MCF 10A (cell line): ENCODE measurements at regions of chr2 and their contacts with region 1.

Region 1: DNA sequence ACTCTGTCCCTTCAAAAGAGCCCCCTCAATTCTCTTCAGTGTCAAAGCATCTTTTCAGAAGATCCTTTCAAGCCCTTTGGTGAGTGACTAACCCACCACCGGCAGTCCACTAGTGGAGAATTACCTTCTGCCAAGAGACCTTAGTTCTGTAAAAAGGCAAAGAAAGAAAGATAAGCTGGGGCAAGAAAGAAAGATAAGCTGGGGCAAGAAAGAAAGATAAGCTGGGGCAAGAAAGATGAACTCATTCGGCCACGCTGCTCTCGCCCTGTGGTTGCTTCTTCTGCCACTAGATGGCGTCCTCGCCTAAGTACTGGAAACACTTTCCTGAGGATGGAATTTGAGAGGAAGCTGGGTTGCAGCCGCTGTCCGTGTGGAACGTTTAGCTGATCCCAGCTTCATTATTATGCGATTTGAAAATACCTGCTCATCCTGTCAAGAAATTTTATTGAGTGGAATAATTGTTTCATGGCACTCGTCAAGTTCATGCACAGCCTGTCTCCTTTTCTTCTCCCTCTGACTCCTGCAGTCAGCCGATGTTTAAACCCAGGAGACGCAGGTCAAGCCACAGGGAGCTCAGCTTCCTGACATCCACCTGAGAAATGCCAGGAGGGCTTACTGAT is 17.3 kb upstream of the ANXA4 start:
- DNase-seq: peak; percentile 81
- H3K4me3 Mint-ChIP-seq: peak overlapping the region; percentile 37
- H3K27ac Mint-ChIP-seq: no peak overlapping the region
- H3K4me1 Mint-ChIP-seq: peaks cover 5% of the 10 kb centered on the region
- H3K27me3 Mint-ChIP-seq: no peaks in the 10 kb centered on the region
- CTCF ChIP-seq: peak; percentile 93

Region 2: GRCh38 chr2:69559442-69560146 is 165.1 kb before region 1 on chr2:
- CTCF ChIA-PET with region 1: interaction called, 83 read pairs
- POLR2A ChIA-PET with region 1: no interaction called
- intact Hi-C with region 1: no loop called
- DNase-seq: peak; percentile 71
- H3K4me3 Mint-ChIP-seq: no peak overlapping the region
- H3K27ac Mint-ChIP-seq: no peak overlapping the region
- H3K4me1 Mint-ChIP-seq: peaks cover 6% of the 10 kb centered on the region
- H3K27me3 Mint-ChIP-seq: no peaks in the 10 kb centered on the region
- CTCF ChIP-seq: peak; percentile 64

Region 3: DNA sequence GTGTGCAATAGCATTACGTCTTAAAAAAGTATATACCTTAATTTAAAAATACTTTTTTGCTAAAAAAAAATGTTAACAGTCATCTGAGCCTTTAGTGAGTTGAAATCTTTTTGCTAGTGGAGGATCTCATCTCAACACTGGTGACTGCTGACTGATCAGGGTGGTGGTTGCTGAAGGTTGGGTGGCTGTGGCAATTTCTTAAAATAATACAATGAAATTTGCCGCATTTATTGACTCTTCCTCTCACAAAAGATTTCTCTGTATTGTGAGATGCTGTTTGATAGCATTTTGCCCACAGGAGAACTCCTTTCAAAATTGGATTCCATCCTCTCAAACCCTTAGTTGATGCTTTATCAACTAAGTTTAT is 28.8 kb before region 1 on chr2:
- CTCF ChIA-PET with region 1: interaction called, 13 read pairs
- POLR2A ChIA-PET with region 1: no interaction called
- intact Hi-C with region 1: no loop called
- DNase-seq: no peak
- H3K4me3 Mint-ChIP-seq: no peak overlapping the region
- H3K27ac Mint-ChIP-seq: no peak overlapping the region
- H3K4me1 Mint-ChIP-seq: peaks cover 6% of the 10 kb centered on the region
- H3K27me3 Mint-ChIP-seq: no peaks in the 10 kb centered on the region
- CTCF ChIP-seq: no peak

Region 4: DNA sequence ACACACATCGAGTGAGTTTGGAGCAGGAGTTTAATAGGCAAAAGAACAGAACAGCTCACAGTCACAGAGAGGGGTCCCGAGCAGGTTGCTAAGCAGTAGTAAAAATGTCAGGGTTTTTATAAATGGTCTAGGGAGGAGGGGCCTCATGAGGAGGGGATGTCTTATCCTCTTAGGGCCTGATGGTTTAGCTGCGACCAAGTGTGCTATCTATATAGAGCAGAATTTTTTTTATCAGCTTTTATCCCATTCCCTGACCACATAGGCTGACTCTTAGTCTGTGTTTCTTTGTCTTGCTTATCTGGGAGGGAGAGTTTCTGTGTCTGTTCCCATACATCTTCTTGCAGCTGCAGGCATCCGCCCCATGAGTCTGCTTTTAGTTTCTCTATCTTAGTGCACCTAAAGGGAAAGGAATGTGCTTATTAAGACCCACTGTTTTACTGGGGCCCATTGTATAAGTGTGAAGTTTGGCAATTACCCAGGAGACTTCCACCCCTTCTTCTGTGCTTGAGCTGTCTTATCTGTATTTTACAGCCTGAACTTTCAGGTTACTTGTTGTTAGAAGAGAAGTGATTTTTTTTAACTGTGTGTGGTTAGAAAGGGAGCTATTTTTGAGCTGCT is 74.4 kb after region 1 on chr2:
- CTCF ChIA-PET with region 1: interaction called, 14 read pairs
- POLR2A ChIA-PET with region 1: interaction called, 5 read pairs
- intact Hi-C with region 1: loop called (anchors 1 kb)
- DNase-seq: no peak
- H3K4me3 Mint-ChIP-seq: peak overlapping the region; percentile 71
- H3K27ac Mint-ChIP-seq: peak overlapping the region; percentile 88
- H3K4me1 Mint-ChIP-seq: peaks cover 28% of the 10 kb centered on the region
- H3K27me3 Mint-ChIP-seq: no peaks in the 10 kb centered on the region
- CTCF ChIP-seq: no peak

Region 5: GRCh38 chr2:69829256-69830046 is 104.8 kb after region 1 on chr2 and contains the start of gene GMCL1:
- CTCF ChIA-PET with region 1: interaction called, 18 read pairs
- POLR2A ChIA-PET with region 1: interaction called, 7 read pairs
- intact Hi-C with region 1: no loop called
- DNase-seq: peak; percentile 96
- H3K4me3 Mint-ChIP-seq: peak within 1 kb of the TSS; percentile 97
- H3K27ac Mint-ChIP-seq: peak within 1 kb of the TSS; percentile 59
- H3K4me1 Mint-ChIP-seq: peaks cover 18% of the 10 kb centered on the region
- H3K27me3 Mint-ChIP-seq: no peaks in the 10 kb centered on the region
- CTCF ChIP-seq: no peak
- total RNA-seq, gene GMCL1: 13.2 and 13.6 TPM in 2 replicates

Region 6: GRCh38 chr2:70305531-70305930 is 580.9 kb after region 1 on chr2:
- CTCF ChIA-PET with region 1: no interaction called
- POLR2A ChIA-PET with region 1: no interaction called
- intact Hi-C with region 1: no loop called
- DNase-seq: no peak
- H3K4me3 Mint-ChIP-seq: no peak overlapping the region
- H3K27ac Mint-ChIP-seq: no peak overlapping the region
- H3K4me1 Mint-ChIP-seq: no peaks in the 10 kb centered on the region
- H3K27me3 Mint-ChIP-seq: no peaks in the 10 kb centered on the region
- CTCF ChIP-seq: no peak